Caco-2 (cell line): ENCODE measurements at regions of chr22 and their contacts with region 1.

Region 1: DNA sequence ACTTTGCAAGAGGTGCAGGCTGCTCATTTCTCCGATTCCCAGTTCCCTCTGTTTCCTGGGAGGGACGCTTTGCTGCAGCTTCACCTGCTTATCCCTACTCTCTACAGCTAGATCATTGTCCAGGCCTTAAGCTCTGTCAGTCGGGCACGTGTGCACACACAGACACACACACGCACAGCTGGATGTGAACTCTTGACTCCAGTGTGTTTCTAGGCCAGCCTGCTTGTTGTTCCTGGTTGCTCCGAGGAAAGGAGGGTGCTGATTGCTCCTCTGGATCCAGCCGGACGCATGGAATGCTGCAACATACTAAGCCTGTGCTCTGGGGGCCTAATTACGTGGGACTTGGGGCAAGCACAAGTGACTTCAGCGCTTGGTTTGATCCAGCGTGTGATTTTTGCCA is 19.7 kb downstream of the ZNRF3 start:
- DNase-seq: no peak
- H3K4me3 ChIP-seq: no peak overlapping the region
- H3K4me3 Mint-ChIP-seq: peak overlapping the region; percentile 5
- H3K27ac Mint-ChIP-seq: no peak overlapping the region
- H3K4me1 ChIP-seq: peaks cover 47% of the 10 kb centered on the region
- H3K4me1 Mint-ChIP-seq: peaks cover 37% of the 10 kb centered on the region
- H3K27me3 ChIP-seq: no peaks in the 10 kb centered on the region
- H3K27me3 Mint-ChIP-seq: no peaks in the 10 kb centered on the region
- CTCF ChIP-seq: no peak

Region 2: GRCh38 chr22:28992565-28993356 is 89.7 kb after region 1 on chr22:
- CTCF ChIA-PET with region 1: no interaction called
- POLR2A ChIA-PET with region 1: interaction called, 10 read pairs
- intact Hi-C with region 1: no loop called
- DNase-seq: no peak
- H3K4me3 ChIP-seq: no peak overlapping the region
- H3K4me3 Mint-ChIP-seq: no peak overlapping the region
- H3K27ac Mint-ChIP-seq: peak overlapping the region; percentile 2
- H3K4me1 ChIP-seq: peaks cover 6% of the 10 kb centered on the region; the same call in 1 of the 2 replicates
- H3K4me1 Mint-ChIP-seq: peaks cover 11% of the 10 kb centered on the region
- H3K27me3 ChIP-seq: no peaks in the 10 kb centered on the region
- H3K27me3 Mint-ChIP-seq: no peaks in the 10 kb centered on the region
- CTCF ChIP-seq: no peak